Breast epithelium (tissue), 4 donors: ENCODE measurements at regions of chr2 and their contacts with region 1.

Region 1: GRCh38 chr2:199543606-199544172 is 86.0 kb upstream of the SATB2 start:
- DNase-seq: no peak
- H3K4me3 ChIP-seq: no peak overlapping the region
- H3K27ac ChIP-seq: no peak overlapping the region
- H3K4me1 ChIP-seq: no peaks in the 10 kb centered on the region
- H3K27me3 ChIP-seq: no peaks in the 10 kb centered on the region
- CTCF ChIP-seq: no peak
- POLR2A ChIP-seq: no peak

Region 2: GRCh38 chr2:199273042-199273511 is 270.6 kb before region 1 on chr2:
- intact Hi-C with region 1: loop called (anchors 10 kb)
- DNase-seq: no peak
- H3K4me3 ChIP-seq: no peak overlapping the region
- H3K27ac ChIP-seq: no peak overlapping the region
- H3K4me1 ChIP-seq: no peaks in the 10 kb centered on the region
- H3K27me3 ChIP-seq: no peaks in the 10 kb centered on the region
- CTCF ChIP-seq: no peak
- POLR2A ChIP-seq: no peak

Region 3: DNA sequence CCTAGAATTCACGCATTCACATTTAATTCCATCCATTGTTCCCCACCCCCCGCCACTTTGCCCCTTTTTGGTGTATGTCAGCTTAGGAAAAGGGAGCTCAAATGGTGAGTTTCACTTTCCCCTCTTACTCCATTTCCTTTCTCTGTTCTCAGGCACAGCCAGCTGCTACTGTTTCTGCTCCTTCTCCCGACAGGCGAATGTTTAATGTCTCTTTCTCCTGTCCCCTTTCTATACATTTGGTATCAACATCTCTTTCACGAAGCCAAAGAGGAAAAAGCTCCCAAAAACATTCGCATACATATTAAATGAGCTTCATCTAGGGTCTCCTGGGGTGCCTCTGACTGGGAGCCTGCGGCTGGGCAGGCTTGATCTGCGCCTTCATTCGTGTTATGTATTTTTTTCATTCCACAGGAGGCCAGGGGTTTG is 38.3 kb after region 1 on chr2:
- intact Hi-C with region 1: no loop called
- DNase-seq: no peak
- H3K4me3 ChIP-seq: peak overlapping the region in 2 of 3 donors; percentile 22 to 47
- H3K27ac ChIP-seq: no peak overlapping the region
- H3K4me1 ChIP-seq: no peaks in the 10 kb centered on the region
- H3K27me3 ChIP-seq: no peaks in the 10 kb centered on the region
- CTCF ChIP-seq: no peak
- POLR2A ChIP-seq: no peak